ENCODE measurements at regions of chr1 and their contacts with region 1.

Region 1: DNA sequence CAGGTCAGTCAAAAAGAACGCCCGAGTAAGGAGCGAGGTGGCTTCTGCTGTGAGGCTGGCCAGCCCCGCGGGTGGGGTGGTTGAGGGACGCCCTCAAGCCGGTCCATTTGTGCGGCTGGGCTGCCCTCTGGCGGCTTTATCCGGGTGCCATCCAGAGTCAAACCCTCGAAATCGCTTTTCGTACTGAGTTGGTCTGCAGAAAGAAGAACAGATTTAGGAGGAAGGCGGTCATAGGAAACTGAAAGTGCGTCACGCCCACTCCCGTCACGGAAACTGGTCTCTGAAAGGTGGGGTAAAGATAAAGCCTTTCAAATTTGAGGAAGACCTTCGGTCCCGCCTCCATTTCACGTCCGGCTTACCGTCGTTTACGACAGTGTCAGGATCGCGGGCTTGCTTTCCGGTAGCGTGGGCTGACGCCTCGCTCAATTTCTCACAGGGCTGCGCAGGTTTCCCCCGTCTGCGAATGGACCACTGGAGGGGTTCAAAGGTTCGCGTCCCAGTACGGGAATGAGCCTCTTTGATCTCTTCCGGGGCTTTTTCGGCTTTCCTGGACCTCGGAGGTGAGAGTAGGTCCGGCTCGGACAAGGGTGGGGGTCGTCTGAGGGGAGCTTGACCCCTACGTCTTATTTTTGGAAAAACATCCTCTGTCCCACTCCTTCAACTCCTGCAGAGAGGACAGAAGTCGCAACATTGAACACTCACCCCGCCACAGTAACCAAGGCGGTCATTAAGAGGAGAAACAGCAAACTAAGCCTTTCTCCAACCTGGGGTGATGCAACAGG is at the start of gene HAX1:
- DNase-seq: peak; percentile 96
- H3K4me3 Mint-ChIP-seq: peak within 1 kb of the TSS; percentile 96
- H3K27ac Mint-ChIP-seq: peak within 1 kb of the TSS; percentile 94
- H3K4me1 Mint-ChIP-seq: peaks cover 28% of the 10 kb centered on the region
- H3K27me3 Mint-ChIP-seq: no peaks in the 10 kb centered on the region
- total RNA-seq, gene HAX1: 112 and 113 TPM in 2 replicates

Region 2: GRCh38 chr1:153990468-153991150 is 281.8 kb before region 1 on chr1 and contains the start of gene RPS27:
- intact Hi-C with region 1: loop called (anchors 1 kb)
- DNase-seq: peak; percentile 88
- H3K4me3 Mint-ChIP-seq: peak within 1 kb of the TSS; percentile 88
- H3K27ac Mint-ChIP-seq: peak within 1 kb of the TSS; percentile 92
- H3K4me1 Mint-ChIP-seq: peaks cover 39% of the 10 kb centered on the region
- H3K27me3 Mint-ChIP-seq: no peaks in the 10 kb centered on the region
- total RNA-seq, gene RPS27: 1,296 and 1,372 TPM in 2 replicates

Region 3: DNA sequence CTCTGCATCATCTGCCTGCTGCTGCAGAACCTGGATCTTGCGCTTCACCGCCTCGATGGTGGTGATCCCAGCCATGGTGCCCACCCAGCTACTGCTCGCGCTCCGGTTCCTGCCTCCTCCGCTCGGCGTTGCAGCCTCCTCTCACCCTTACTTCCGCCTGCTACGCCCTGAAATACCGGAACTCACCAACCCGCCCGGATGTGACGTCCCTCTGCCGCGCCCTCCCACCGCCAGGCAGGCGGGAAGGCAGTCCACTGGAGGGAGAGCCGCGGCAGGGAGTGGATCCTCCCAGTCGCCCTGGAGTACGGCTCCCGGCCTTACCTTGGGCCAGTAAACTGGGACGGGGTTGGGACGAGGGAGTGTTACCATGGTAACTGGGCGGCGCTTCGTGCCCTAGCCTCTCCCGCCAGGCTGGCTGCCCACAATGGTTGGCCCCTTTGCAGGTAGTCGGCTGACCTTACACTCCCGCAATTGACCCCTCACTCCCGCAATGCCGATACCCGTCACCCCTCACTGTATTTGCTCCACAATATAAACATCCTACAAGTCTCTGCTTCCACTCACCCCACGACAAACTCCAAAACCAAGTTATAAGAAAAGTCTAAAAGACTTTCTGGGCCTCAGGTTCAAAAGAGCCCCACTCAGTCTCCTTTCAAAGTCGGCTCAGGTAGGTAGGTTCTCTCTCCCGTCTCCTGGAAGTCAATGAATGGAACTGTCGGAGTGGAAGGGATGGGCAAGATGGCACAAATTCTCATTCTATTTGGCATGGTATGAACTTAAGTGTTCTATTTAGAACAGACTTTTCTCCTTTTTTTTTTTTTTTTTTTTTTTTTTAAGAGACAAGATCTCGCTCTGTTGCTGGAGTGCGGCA is 89.1 kb before region 1 on chr1:
- intact Hi-C with region 1: loop called (anchors 1 kb)
- DNase-seq: peak; percentile 93
- H3K4me3 Mint-ChIP-seq: peak overlapping the region; percentile 99
- H3K27ac Mint-ChIP-seq: peak overlapping the region; percentile 98
- H3K4me1 Mint-ChIP-seq: peaks cover 43% of the 10 kb centered on the region
- H3K27me3 Mint-ChIP-seq: peaks cover 3% of the 10 kb centered on the region

Region 4: GRCh38 chr1:154220071-154220969 is 52.1 kb before region 1 on chr1 and contains the start of gene UBAP2L:
- intact Hi-C with region 1: loop called (anchors 1 kb)
- DNase-seq: peak; percentile 99
- H3K4me3 Mint-ChIP-seq: peak within 1 kb of the TSS; percentile 93
- H3K27ac Mint-ChIP-seq: peak within 1 kb of the TSS; percentile 97
- H3K4me1 Mint-ChIP-seq: peaks cover 55% of the 10 kb centered on the region
- H3K27me3 Mint-ChIP-seq: no peaks in the 10 kb centered on the region
- total RNA-seq, gene UBAP2L: 259 and 263 TPM in 2 replicates

Region 5: DNA sequence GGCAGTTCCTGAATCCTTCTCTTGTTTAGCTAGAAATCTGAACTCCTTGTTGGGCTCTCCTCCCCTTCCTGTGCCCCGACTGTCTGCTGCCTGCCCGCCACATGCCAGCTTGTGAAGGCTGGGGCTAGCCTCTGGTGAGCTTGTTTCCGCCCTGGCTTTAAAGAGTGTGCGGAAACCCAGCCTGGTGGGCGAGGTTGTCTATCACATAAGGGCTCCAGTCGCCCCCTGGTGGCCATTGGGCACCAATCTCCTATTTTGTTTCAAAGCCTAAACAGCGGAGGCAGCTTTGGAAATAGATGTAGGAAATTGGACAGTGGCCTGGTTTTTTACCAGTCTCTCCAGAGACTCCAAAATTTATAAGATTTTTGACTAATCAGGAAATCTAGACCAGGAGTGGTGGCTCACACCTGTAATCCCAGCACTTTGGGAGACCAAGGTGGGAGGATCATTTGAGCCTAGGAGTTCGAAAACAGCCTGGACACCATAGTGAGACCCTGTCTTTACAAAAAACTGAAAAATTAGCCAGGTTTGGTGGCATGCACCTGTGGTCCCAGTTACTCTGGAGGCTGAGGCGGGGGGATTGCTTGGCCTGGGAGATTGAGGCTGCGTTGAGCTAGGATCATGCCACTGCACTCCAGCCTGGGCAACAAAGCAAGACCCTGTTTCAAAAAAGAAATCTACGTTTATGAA is 62.8 kb after region 1 on chr1:
- intact Hi-C with region 1: loop called (anchors 2 kb)
- DNase-seq: peak; percentile 79
- H3K4me3 Mint-ChIP-seq: no peak overlapping the region
- H3K27ac Mint-ChIP-seq: peak overlapping the region; percentile 76
- H3K4me1 Mint-ChIP-seq: peaks cover 49% of the 10 kb centered on the region
- H3K27me3 Mint-ChIP-seq: no peaks in the 10 kb centered on the region

Measured in activated T-helper 2 cell treated with anti-CD3 and anti-CD28 coated beads, Interferon-gamma antibody, Interleukin-2, Interleukin-4, amounts not matched to agents 10 μg/mL and 5 μg/mL and 100 μg/mL, durations not matched to agents 14 hours and 24 hours and 36 hours (primary cell).